Activated CD8-positive, alpha-beta T cell treated with anti-CD3 and anti-CD28 coated beads, Interleukin-2, amount 10 ng/mL, durations not matched to agents 7 days and 5 days (primary cell): ENCODE measurements at regions of chr12 and their contacts with region 1.

Region 1: GRCh38 chr12:121060149-121061001 is 21.3 kb upstream of the OASL start:
- DNase-seq: peak; percentile 83
- ATAC-seq: peak; percentile 98
- H3K4me3 Mint-ChIP-seq: peak overlapping the region; percentile 82
- H3K27ac Mint-ChIP-seq: peak overlapping the region; percentile 99
- H3K4me1 Mint-ChIP-seq: peaks cover 31% of the 10 kb centered on the region
- H3K27me3 Mint-ChIP-seq: peaks cover 2% of the 10 kb centered on the region

Region 2: GRCh38 chr12:120580787-120581723 is 479.3 kb before region 1 on chr12 and contains the start of gene POP5:
- CTCF ChIA-PET with region 1: interaction called, 21 read pairs
- POLR2A ChIA-PET with region 1: interaction called, 6 read pairs
- DNase-seq: peak; percentile 97
- ATAC-seq: peak; percentile 97
- H3K4me3 Mint-ChIP-seq: peak within 1 kb of the TSS; percentile 99
- H3K27ac Mint-ChIP-seq: peak within 1 kb of the TSS; percentile 96
- H3K4me1 Mint-ChIP-seq: peaks cover 41% of the 10 kb centered on the region
- H3K27me3 Mint-ChIP-seq: peaks cover 15% of the 10 kb centered on the region
- total RNA-seq, gene POP5: 63.3 to 64.0 TPM

Region 3: DNA sequence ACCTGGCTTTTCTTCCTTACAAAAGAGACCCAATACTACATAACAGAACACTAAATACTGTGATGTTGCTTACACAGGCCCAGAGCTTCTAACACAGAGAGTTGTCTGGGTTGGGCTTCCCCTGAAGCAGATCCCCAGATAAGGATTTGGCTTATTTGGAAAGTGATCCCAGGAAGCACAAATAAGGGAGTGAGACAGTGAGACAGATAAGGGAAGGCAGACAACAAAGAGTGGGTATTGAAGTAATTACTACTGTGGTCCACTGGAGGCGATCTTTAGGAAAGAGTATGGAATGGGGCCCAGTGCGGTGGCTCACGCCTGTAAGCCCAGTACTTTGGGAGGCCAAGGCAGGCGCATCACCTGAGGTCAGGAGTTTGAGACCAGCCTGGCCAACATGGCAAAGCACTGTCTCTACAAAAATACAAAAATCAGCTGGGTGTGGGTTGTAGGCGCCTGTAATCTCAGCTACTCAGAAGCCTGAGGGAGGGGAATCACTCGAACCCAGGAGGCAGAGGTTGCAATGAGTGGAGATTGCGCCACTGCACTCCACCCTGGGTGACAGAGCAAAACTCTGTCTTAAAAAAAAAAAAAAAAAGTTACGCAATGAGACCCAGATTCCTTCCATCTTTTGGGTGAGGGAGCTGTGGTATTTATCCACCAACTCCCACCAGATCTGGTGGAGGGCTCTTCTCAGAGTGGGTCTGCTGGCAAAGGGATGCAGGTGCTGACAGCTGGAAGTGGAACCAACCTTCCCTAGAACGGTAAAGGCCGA is 33.9 kb before region 1 on chr12:
- CTCF ChIA-PET with region 1: interaction called, 13 read pairs
- POLR2A ChIA-PET with region 1: interaction called, 4 read pairs
- DNase-seq: no peak
- ATAC-seq: no peak
- H3K4me3 Mint-ChIP-seq: no peak overlapping the region
- H3K27ac Mint-ChIP-seq: no peak overlapping the region
- H3K4me1 Mint-ChIP-seq: peaks cover 9% of the 10 kb centered on the region
- H3K27me3 Mint-ChIP-seq: no peaks in the 10 kb centered on the region

Region 4: DNA sequence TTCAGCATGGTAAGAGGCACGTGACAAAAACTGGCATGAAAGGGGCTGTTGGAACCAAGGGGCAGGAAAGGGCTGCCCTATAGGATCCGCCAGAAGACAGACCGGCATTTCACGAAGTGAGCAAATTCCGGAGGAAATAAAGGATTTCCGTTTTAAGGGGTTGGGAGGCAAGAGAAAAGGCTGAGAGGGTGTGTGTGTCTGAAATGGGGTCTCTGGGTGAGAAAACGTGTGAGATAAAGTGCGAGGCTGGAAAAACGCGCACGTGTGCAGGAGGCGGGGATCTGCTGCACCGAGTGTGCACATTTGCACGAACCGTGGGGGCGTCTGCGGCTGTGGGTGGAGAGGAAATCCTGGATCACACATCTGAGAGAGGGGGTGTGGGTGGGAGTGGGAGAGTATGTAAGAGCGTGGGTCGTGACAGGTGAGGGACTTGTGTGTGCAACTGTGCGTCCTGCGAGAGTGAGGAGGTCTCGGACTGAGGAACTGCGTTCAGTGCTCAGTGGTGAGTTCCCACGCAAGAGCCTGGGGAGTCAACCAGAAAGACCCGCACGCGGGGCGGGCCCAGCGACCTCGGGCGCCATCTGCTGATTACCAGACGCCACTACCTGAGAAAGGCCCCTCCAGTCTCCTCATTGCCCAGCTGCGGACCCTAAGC is 35.3 kb after region 1 on chr12:
- CTCF ChIA-PET with region 1: interaction called, 127 read pairs
- POLR2A ChIA-PET with region 1: interaction called, 10 read pairs
- DNase-seq: peak; percentile 88
- ATAC-seq: peak; percentile 88
- H3K4me3 Mint-ChIP-seq: peak overlapping the region; percentile 81
- H3K27ac Mint-ChIP-seq: peak overlapping the region; percentile 82
- H3K4me1 Mint-ChIP-seq: peaks cover 52% of the 10 kb centered on the region
- H3K27me3 Mint-ChIP-seq: peaks cover 2% of the 10 kb centered on the region

Region 5: GRCh38 chr12:121110211-121110940 is 50.0 kb after region 1 on chr12:
- CTCF ChIA-PET with region 1: interaction called, 84 read pairs
- POLR2A ChIA-PET with region 1: no interaction called
- DNase-seq: peak; percentile 81
- ATAC-seq: peak; percentile 75
- H3K4me3 Mint-ChIP-seq: no peak overlapping the region
- H3K27ac Mint-ChIP-seq: no peak overlapping the region
- H3K4me1 Mint-ChIP-seq: peaks cover 19% of the 10 kb centered on the region
- H3K27me3 Mint-ChIP-seq: no peaks in the 10 kb centered on the region